ENCODE measurements at regions of chr12 and their contacts with region 1.

Region 1: DNA sequence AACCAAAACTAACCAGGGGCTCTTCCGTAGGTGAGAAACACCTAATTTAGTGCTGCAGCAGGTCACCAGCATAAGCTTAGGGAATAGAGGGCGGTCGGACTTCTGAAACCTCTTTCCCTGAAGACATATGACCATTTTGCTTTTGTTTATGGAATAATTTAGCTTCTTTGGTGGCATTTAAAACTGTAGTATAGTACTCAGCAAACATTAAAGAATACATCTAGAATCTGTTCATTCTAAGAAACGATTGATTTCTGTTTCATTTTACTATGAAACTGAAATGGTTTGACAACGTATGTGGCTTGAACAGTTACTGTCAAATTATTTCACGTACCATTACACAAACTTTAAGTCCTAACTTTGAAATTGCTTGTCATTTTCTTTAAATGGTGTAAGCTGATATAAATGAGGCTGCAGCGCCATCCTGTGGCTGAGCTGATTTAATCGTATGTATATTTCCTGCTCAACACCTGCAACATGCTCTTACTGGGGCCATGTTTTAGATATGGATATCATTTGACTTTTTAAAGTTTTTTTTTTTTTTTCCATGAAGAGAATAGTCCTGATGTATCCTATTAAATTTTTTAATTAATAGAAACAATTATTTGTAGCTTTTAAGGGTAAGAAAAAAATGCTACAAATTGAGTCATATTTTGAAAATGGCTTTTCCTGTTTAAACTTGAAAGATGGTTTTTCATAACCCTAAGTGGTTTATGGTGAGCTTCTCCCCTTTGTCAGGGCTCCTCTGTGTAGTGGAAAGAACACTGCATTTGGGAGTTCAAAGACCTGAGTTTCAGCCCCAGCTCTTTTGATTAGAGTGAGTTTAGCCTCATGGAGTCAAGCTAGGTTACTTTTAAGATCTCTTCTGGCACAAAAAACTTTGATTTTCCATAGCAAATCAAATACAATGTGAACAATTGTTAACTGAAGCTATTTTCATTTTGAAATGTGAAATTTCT is 27.4 kb downstream of the CFAP54 start:
- DNase-seq: peak; percentile 92
- H3K4me3 Mint-ChIP-seq: peak overlapping the region; percentile 24
- H3K27ac Mint-ChIP-seq: peak overlapping the region; percentile 74
- H3K4me1 Mint-ChIP-seq: peaks cover 21% of the 10 kb centered on the region
- H3K27me3 Mint-ChIP-seq: peaks cover 2% of the 10 kb centered on the region

Region 2: GRCh38 chr12:95998611-95999286 is 518.0 kb before region 1 on chr12:
- CTCF ChIA-PET with region 1: interaction called, 16 read pairs
- POLR2A ChIA-PET with region 1: no interaction called
- DNase-seq: peak; percentile 64
- H3K4me3 Mint-ChIP-seq: no peak overlapping the region
- H3K27ac Mint-ChIP-seq: no peak overlapping the region
- H3K4me1 Mint-ChIP-seq: peaks cover 15% of the 10 kb centered on the region
- H3K27me3 Mint-ChIP-seq: no peaks in the 10 kb centered on the region

Region 3: GRCh38 chr12:96068111-96068510 is 448.6 kb before region 1 on chr12:
- CTCF ChIA-PET with region 1: interaction called, 15 read pairs
- POLR2A ChIA-PET with region 1: interaction called, 3 read pairs
- DNase-seq: no peak
- H3K4me3 Mint-ChIP-seq: no peak overlapping the region
- H3K27ac Mint-ChIP-seq: no peak overlapping the region
- H3K4me1 Mint-ChIP-seq: peaks cover 20% of the 10 kb centered on the region
- H3K27me3 Mint-ChIP-seq: peaks cover 5% of the 10 kb centered on the region

Region 4: GRCh38 chr12:96215919-96216273 is 300.9 kb before region 1 on chr12:
- CTCF ChIA-PET with region 1: interaction called, 100 read pairs
- POLR2A ChIA-PET with region 1: interaction called, 26 read pairs
- DNase-seq: no peak
- H3K4me3 Mint-ChIP-seq: no peak overlapping the region
- H3K27ac Mint-ChIP-seq: no peak overlapping the region
- H3K4me1 Mint-ChIP-seq: peaks cover 51% of the 10 kb centered on the region
- H3K27me3 Mint-ChIP-seq: no peaks in the 10 kb centered on the region

Region 5: DNA sequence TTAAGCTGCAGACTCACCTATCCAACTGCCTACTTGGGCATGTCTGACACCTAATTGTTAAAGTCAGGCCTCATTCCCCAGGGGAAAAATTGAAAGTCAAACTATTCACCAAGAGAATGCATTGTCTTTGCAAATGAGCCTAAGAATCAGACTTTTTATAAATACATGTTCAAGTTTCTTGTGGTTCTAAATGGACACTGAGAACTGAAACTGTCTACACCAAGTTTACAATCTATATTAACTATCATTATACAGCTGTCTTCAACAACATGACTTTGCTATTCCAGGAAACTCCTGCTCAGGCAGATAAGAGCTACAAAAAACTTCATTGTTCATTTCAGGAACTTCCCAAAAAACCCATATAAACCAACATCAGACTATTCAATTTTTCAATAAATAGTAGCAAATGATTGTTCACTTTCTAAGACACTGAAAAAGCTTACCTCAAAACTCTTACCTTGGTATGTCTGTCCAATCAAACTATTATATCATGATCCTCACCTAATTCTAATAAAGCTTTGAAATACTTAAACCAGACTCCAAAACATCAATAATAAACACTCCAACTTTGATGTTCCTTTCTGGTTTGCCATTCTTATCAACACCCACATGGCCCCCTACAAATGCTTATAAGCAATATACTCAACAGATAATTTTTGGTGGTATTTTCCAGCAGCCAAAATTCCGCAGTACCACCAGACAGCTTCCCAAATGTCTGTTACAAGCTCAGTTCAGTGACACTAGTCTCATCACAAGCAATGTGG is 140.7 kb before region 1 on chr12:
- CTCF ChIA-PET with region 1: interaction called, 13 read pairs
- POLR2A ChIA-PET with region 1: no interaction called
- DNase-seq: no peak
- H3K4me3 Mint-ChIP-seq: no peak overlapping the region
- H3K27ac Mint-ChIP-seq: no peak overlapping the region
- H3K4me1 Mint-ChIP-seq: peaks cover 64% of the 10 kb centered on the region
- H3K27me3 Mint-ChIP-seq: no peaks in the 10 kb centered on the region

Region 6: DNA sequence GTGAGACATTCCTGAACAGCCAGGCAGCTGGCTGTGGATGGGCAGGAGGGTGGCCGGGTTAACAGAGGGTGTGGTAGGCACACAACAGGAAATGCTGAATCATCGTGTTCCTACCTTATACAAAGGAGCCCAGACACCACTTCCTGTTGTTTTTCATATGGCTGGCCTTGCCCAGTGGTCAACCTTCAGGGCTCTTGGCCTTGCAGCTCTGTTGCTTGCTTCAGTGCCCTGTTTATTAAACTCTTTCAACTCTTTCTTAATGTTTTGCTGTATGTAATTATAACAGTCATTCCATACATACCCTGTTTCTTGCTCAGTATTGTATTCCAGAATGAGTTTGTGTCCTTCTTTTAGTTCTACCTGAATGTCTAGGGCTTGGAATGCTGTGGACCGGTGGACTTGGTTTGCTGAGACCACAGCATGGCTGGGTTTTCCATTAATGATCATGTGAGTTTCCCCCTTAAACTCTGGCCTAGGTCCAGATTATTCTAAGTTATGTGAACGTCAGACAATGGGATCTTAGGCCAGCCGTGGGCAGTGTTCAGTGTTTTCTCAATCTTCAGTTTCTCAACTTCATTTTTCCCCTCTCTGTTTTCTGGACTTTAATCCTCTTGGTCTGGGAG is 15.5 kb before region 1 on chr12:
- CTCF ChIA-PET with region 1: interaction called, 12 read pairs
- POLR2A ChIA-PET with region 1: interaction called, 13 read pairs
- DNase-seq: peak; percentile 57
- H3K4me3 Mint-ChIP-seq: peak overlapping the region; percentile 25
- H3K27ac Mint-ChIP-seq: peak overlapping the region; percentile 89
- H3K4me1 Mint-ChIP-seq: peaks cover 54% of the 10 kb centered on the region
- H3K27me3 Mint-ChIP-seq: no peaks in the 10 kb centered on the region

Measured in activated CD4-positive, alpha-beta memory T cell treated with anti-CD3 and anti-CD28 coated beads, Interleukin-2, amount 10 ng/mL, durations not matched to agents 7 days and 5 days (primary cell).